ENCODE measurements at regions of chr11 and their contacts with region 1.

Region 1: GRCh38 chr11:75826461-75827230 is 11.6 kb downstream of the UVRAG start:
- DNase-seq: no peak
- ATAC-seq: no peak
- H3K4me3 ChIP-seq: no peak overlapping the region
- H3K27ac ChIP-seq: no peak overlapping the region
- H3K4me1 ChIP-seq: 0 out of 2 replicates have a peak, but pooled peaks cover 3% of the 10 kb centered on the region
- H3K27me3 ChIP-seq: no peaks in the 10 kb centered on the region
- CTCF ChIP-seq: no peak

Region 2: GRCh38 chr11:75450826-75451821 is 375.5 kb before region 1 on chr11:
- CTCF ChIA-PET with region 1: no interaction called
- POLR2A ChIA-PET with region 1: no interaction called
- in situ Hi-C with region 1: no loop called
- intact Hi-C with region 1: no loop called
- DNase-seq: no peak
- ATAC-seq: 0 out of 2 replicates have a peak, but pooled peaks have one; percentile 49
- H3K4me3 ChIP-seq: no peak overlapping the region
- H3K27ac ChIP-seq: no peak overlapping the region
- H3K4me1 ChIP-seq: no peaks in the 10 kb centered on the region
- H3K27me3 ChIP-seq: 0 out of 2 replicates have a peak, but pooled peaks cover 3% of the 10 kb centered on the region
- CTCF ChIP-seq: peak; percentile 95

Region 3: GRCh38 chr11:75814686-75815344 is 11.8 kb before region 1 on chr11 and contains the start of gene UVRAG:
- CTCF ChIA-PET with region 1: no interaction called
- POLR2A ChIA-PET with region 1: interaction called, 13 read pairs
- in situ Hi-C with region 1: no loop called
- intact Hi-C with region 1: no loop called
- DNase-seq: peak; percentile 98
- ATAC-seq: peak; percentile 95
- H3K4me3 ChIP-seq: peak within 1 kb of the TSS; percentile 77 to 91
- H3K27ac ChIP-seq: peak within 1 kb of the TSS; percentile 83
- H3K4me1 ChIP-seq: peaks cover 23% of the 10 kb centered on the region
- H3K27me3 ChIP-seq: no peaks in the 10 kb centered on the region
- CTCF ChIP-seq: no peak
- total RNA-seq, gene UVRAG: 29.5 TPM

Region 4: GRCh38 chr11:76071090-76071489 is 244.4 kb after region 1 on chr11:
- CTCF ChIA-PET with region 1: no interaction called
- POLR2A ChIA-PET with region 1: interaction called, 19 read pairs
- in situ Hi-C with region 1: no loop called
- intact Hi-C with region 1: no loop called
- DNase-seq: no peak
- ATAC-seq: no peak
- H3K4me3 ChIP-seq: no peak overlapping the region
- H3K27ac ChIP-seq: no peak overlapping the region
- H3K4me1 ChIP-seq: no peaks in the 10 kb centered on the region
- H3K27me3 ChIP-seq: no peaks in the 10 kb centered on the region
- CTCF ChIP-seq: no peak